H1 (cell line): ENCODE measurements at regions of chr4 and their contacts with region 1.

Region 1: DNA sequence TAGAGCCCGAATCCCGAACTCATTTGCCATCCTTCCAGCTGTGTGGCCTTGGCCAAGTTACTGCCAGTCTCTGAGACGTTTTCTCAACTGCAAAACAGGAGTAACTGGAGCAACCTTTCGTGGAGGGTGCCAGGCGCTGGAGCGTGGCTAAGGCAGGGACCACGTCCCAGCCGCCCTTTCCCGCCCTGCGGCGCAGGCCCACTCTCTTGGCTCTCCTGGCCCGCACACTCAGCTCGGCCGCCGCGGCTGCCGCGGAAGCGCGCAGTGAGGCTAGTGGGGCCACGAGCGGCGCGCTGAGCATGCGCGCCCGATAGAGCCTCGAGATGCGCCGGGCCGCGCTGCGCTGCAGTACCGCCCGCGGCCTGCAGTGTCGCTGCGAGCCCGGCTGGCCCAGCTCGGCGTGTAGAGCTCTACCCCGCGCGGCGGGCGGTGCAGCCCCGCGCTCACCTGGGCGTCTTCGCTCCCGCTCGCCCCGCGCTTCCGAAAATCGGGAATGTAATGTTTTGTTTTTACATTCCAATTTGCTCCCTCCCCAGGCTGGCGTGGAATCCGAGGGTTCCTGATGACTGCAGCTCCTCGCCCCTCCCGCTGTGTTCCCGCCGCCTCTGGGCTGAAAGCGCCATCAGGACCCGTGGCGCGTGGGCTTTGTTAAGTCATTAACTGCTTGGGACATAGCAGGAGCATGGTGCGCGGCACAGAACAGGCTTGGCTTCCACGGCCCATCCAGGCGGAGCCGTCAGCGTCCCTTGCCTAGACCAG is 4.0 kb upstream of the ZNF518B start:
- DNase-seq: peak in 1 of 2 experiments; percentile 86
- H3K4me3 ChIP-seq: peak overlapping the region; percentile 38 to 79 (median 67)
- H3K27ac ChIP-seq: no peak overlapping the region
- H3K4me1 ChIP-seq: peaks cover 0 to 21% (median 11%) of the 10 kb centered on the region in 4 experiments; a peak in 5 of 7 replicates
- H3K27me3 ChIP-seq: peaks cover 57 to 72% (median 66%) of the 10 kb centered on the region in 4 experiments
- CTCF ChIP-seq: peak; percentile 86 to 93 (median 91)
- EP300 ChIP-seq: no peak
- POLR2A ChIP-seq: no peak
- RAD21 ChIP-seq: peak; percentile 70 to 83

Region 2: GRCh38 chr4:10178763-10179162 is 282.5 kb before region 1 on chr4:
- CTCF ChIA-PET with region 1: no interaction called
- POLR2A ChIA-PET with region 1: no interaction called
- DNase-seq: no peak
- H3K4me3 ChIP-seq: no peak overlapping the region
- H3K27ac ChIP-seq: no peak overlapping the region
- H3K4me1 ChIP-seq: no peaks in the 10 kb centered on the region
- H3K27me3 ChIP-seq: no peaks in the 10 kb centered on the region
- CTCF ChIP-seq: no peak
- EP300 ChIP-seq: no peak
- POLR2A ChIP-seq: no peak
- RAD21 ChIP-seq: no peak

Region 3: GRCh38 chr4:10526429-10527222 is 65.4 kb after region 1 on chr4:
- CTCF ChIA-PET with region 1: interaction called, 20 read pairs
- POLR2A ChIA-PET with region 1: interaction called, 4 read pairs
- DNase-seq: no peak
- H3K4me3 ChIP-seq: no peak overlapping the region
- H3K27ac ChIP-seq: no peak overlapping the region
- H3K4me1 ChIP-seq: no peaks in the 10 kb centered on the region
- H3K27me3 ChIP-seq: no peaks in the 10 kb centered on the region; a peak in 1 of 7 replicates
- CTCF ChIP-seq: peak; percentile 58 to 66 (median 61)
- EP300 ChIP-seq: no peak
- POLR2A ChIP-seq: no peak
- RAD21 ChIP-seq: peak; percentile 74 to 83

Region 4: DNA sequence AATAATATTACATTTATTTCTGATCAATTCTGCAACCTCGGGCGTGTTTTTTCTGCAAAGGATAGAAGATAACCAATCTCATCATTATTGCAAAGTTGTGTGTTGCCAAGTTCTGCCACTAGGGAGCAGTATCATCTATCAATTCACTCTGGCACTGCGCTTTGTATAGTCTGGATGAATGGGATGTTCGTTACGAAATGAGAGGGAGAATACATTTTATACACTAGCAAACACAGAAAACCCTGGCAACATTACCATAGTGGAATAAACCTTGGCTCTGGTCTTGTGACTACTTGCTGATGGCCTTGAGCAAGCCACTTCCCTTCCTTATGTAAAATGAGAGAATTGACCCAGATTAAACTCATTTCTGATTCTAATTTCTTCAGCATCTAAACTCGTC is 93.4 kb after region 1 on chr4:
- CTCF ChIA-PET with region 1: interaction called, 16 read pairs
- POLR2A ChIA-PET with region 1: interaction called, 3 read pairs
- DNase-seq: peak in 1 of 2 experiments; percentile 77
- H3K4me3 ChIP-seq: no peak overlapping the region
- H3K27ac ChIP-seq: no peak overlapping the region
- H3K4me1 ChIP-seq: no peaks in the 10 kb centered on the region
- H3K27me3 ChIP-seq: no peaks in the 10 kb centered on the region
- CTCF ChIP-seq: peak in 2 of 3 experiments; percentile 59 to 75; a peak in 3 of 4 replicates
- EP300 ChIP-seq: no peak
- POLR2A ChIP-seq: no peak
- RAD21 ChIP-seq: peak; percentile 85 to 86

Region 5: DNA sequence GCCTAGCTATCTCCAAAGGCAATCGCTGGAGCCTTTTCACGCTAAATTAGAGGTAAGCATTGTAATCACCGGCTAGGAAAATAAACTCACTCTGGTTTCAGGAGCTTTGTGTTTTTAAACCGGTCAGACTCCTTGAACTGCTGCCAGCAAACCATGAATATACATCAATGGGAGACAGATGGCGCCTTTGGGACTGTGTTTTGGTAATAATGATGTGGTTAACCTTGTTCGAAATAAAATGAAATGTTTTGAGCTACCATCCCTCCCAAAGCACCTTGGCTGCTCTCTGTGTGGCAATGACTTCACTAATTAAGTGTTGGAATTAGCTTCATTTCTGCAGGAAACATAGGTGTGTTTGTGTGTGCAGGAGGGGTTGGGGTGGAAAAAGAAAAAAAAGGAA is 157.9 kb after region 1 on chr4:
- CTCF ChIA-PET with region 1: no interaction called
- POLR2A ChIA-PET with region 1: no interaction called
- DNase-seq: no peak
- H3K4me3 ChIP-seq: no peak overlapping the region
- H3K27ac ChIP-seq: no peak overlapping the region
- H3K4me1 ChIP-seq: no peaks in the 10 kb centered on the region
- H3K27me3 ChIP-seq: no peaks in the 10 kb centered on the region
- CTCF ChIP-seq: no peak
- EP300 ChIP-seq: no peak
- POLR2A ChIP-seq: no peak
- RAD21 ChIP-seq: 0 out of 4 replicates have a peak, but pooled peaks of 1 of the 2 experiments have one; percentile 6